PC-9 (cell line): ENCODE measurements at regions of chr21 and their contacts with region 1.

Region 1: GRCh38 chr21:32770871-32771523 is 558 bp downstream of the PAXBP1 start:
- DNase-seq: peak; percentile 44 to 49
- H3K4me3 ChIP-seq: peak overlapping the region; percentile 81
- H3K27ac ChIP-seq: peak overlapping the region; percentile 77
- H3K4me1 ChIP-seq: peaks cover 18% of the 10 kb centered on the region
- H3K27me3 ChIP-seq: no peaks in the 10 kb centered on the region
- CTCF ChIP-seq: no peak

Region 2: DNA sequence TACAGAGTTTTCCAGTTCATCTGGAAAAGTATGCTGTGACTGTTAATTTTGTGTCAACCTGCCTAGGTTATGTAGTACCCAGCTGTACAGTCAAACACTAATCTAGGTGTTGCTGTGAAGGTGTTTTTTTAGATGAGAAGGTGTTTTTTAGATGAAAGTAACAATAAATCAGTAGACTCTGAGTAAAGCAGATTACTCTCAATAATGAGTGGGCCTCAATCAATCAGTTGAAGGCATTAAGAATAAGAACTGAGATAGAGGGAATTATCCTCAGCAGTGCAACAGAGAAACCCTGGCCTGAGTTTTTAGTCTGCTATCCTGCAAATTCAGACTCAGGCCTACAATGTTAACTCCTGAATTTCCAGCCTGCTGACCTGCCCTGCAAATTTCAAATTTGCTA is 1072.5 kb before region 1 on chr21:
- CTCF ChIA-PET with region 1: no interaction called
- POLR2A ChIA-PET with region 1: interaction called, 18 read pairs
- intact Hi-C with region 1: no loop called
- DNase-seq: no peak
- H3K4me3 ChIP-seq: no peak overlapping the region
- H3K27ac ChIP-seq: no peak overlapping the region
- H3K4me1 ChIP-seq: no peaks in the 10 kb centered on the region
- H3K27me3 ChIP-seq: no peaks in the 10 kb centered on the region
- CTCF ChIP-seq: no peak

Region 3: DNA sequence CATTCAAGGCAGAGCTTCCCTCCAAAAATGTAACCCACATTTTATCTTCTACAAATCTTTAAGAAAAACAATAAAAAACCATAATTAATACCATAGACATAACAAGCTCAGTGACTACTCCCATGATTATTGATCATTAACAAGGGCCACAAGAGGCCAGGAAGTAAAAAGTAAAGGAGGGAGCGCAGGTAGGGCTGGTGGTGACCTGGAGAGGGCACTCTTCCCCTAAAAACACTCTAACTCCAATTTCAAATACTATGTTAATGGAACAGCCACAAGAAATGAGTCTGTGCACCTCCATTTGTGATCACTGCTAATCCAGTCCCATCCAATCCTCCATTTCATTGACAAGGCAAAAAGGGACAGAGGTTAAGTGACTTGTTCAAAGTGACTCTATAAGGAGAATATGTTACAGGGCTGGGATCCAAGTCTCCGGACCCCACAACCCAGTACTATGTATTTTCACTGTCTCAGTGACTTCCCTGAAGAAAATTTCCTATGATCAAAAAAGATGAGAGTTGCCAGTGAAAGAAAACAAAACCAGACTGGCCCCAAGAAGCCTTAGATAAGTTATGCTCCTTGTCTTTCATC is 117.6 kb before region 1 on chr21:
- CTCF ChIA-PET with region 1: no interaction called
- POLR2A ChIA-PET with region 1: no interaction called
- intact Hi-C with region 1: loop called (anchors 5 kb)
- DNase-seq: no peak
- H3K4me3 ChIP-seq: no peak overlapping the region
- H3K27ac ChIP-seq: no peak overlapping the region
- H3K4me1 ChIP-seq: no peaks in the 10 kb centered on the region
- H3K27me3 ChIP-seq: no peaks in the 10 kb centered on the region
- CTCF ChIP-seq: peak; percentile 67

Region 4: GRCh38 chr21:32727687-32728455 is 43.1 kb before region 1 on chr21 and contains the start of gene SYNJ1:
- CTCF ChIA-PET with region 1: no interaction called
- POLR2A ChIA-PET with region 1: interaction called, 23 read pairs
- intact Hi-C with region 1: loop called (anchors 1 kb)
- DNase-seq: peak; percentile 75 to 93
- H3K4me3 ChIP-seq: peak within 1 kb of the TSS; percentile 71
- H3K27ac ChIP-seq: peak within 1 kb of the TSS; percentile 37; the same call in 1 of the 2 replicates
- H3K4me1 ChIP-seq: peaks cover 14% of the 10 kb centered on the region
- H3K27me3 ChIP-seq: no peaks in the 10 kb centered on the region
- CTCF ChIP-seq: no peak
- total RNA-seq, gene SYNJ1: 3.3 and 4.8 TPM in 2 replicates

Region 5: GRCh38 chr21:32878661-32879060 is 107.7 kb after region 1 on chr21:
- CTCF ChIA-PET with region 1: no interaction called
- POLR2A ChIA-PET with region 1: no interaction called
- intact Hi-C with region 1: no loop called
- DNase-seq: no peak
- H3K4me3 ChIP-seq: no peak overlapping the region
- H3K27ac ChIP-seq: no peak overlapping the region
- H3K4me1 ChIP-seq: no peaks in the 10 kb centered on the region
- H3K27me3 ChIP-seq: peaks cover 35% of the 10 kb centered on the region
- CTCF ChIP-seq: no peak

Region 6: GRCh38 chr21:33286600-33287456 is 515.8 kb after region 1 on chr21:
- CTCF ChIA-PET with region 1: no interaction called
- POLR2A ChIA-PET with region 1: interaction called, 14 read pairs
- intact Hi-C with region 1: no loop called
- DNase-seq: peak; percentile 62 to 66
- H3K4me3 ChIP-seq: no peak overlapping the region
- H3K27ac ChIP-seq: peak overlapping the region; percentile 43
- H3K4me1 ChIP-seq: peaks cover 16% of the 10 kb centered on the region
- H3K27me3 ChIP-seq: no peaks in the 10 kb centered on the region
- CTCF ChIP-seq: no peak